ENCODE measurements at regions of chr3 and their contacts with region 1.

Region 1: DNA sequence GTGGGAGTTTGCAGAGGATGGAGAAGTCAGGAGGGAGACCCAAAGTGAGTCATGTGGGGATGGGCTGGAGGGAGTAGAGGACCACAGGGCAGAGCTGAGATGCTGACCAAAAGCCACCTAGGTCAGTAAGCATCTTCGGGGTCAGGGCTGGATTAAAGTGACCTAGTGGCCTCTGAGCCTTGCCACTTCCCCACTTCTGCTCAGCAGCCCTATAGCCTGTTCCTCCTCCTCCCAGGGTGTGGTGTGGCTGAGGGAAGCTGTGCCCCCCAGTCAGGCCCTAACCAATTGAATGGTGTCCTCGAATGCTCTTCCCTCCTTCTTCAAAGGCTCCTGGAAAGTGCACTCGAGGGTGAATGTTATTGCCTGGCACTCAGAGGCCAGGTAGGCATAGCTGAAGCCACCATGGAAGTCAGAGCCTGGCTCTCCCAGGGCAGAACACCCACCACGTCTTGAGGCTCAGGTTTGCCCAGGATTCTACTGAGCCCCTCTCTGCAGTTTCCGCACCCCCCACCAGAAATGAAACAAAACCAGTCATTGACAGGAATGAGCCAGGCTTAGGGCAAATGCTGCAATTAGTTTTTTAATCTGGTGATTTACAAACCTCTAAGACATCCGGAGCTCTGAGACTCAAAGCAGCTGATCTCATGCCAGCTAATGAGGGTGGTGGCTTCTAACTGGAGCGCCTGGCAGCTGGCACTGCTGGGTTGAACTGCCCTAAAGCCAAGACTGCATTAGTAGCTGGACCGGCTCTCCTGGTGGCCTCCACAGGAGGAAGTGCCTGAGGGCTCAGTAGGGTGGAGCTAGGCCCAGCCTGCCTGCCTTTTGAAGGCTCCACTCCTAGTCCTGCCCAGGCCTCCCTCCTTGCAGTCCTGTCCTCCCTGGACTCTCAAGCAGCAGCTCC is 26.0 kb upstream of the VIPR1 start:
- DNase-seq: no peak
- ATAC-seq: no peak
- H3K4me3 ChIP-seq: no peak overlapping the region
- H3K27ac ChIP-seq: no peak overlapping the region
- H3K4me1 ChIP-seq: no peaks in the 10 kb centered on the region
- H3K27me3 ChIP-seq: no peaks in the 10 kb centered on the region
- CTCF ChIP-seq: no peak
- EP300 ChIP-seq: no peak
- POLR2A ChIP-seq: no peak
- RAD21 ChIP-seq: no peak

Region 2: GRCh38 chr3:42228806-42229205 is 247.7 kb before region 1 on chr3:
- CTCF ChIA-PET with region 1: no interaction called
- POLR2A ChIA-PET with region 1: no interaction called
- RAD21 ChIA-PET with region 1: no interaction called
- SMC1A ChIA-PET with region 1: no interaction called
- in situ Hi-C with region 1: no loop called
- intact Hi-C with region 1: no loop called
- DNase-seq: no peak
- ATAC-seq: peak; percentile 61
- H3K4me3 ChIP-seq: no peak overlapping the region
- H3K27ac ChIP-seq: no peak overlapping the region
- H3K4me1 ChIP-seq: peaks cover 3% of the 10 kb centered on the region; the same call in 1 of the 2 replicates
- H3K27me3 ChIP-seq: no peaks in the 10 kb centered on the region
- CTCF ChIP-seq: peak; percentile 45 to 61 (median 51); a peak in 5 of 6 replicates
- EP300 ChIP-seq: no peak
- POLR2A ChIP-seq: no peak
- RAD21 ChIP-seq: peak; percentile 84

Region 3: GRCh38 chr3:42511736-42512135 is 35.3 kb after region 1 on chr3:
- CTCF ChIA-PET with region 1: no interaction called
- POLR2A ChIA-PET with region 1: no interaction called
- RAD21 ChIA-PET with region 1: no interaction called
- SMC1A ChIA-PET with region 1: no interaction called
- in situ Hi-C with region 1: no loop called
- intact Hi-C with region 1: loop called (anchors 1 kb)
- DNase-seq: no peak
- ATAC-seq: no peak
- H3K4me3 ChIP-seq: no peak overlapping the region
- H3K27ac ChIP-seq: no peak overlapping the region
- H3K4me1 ChIP-seq: no peaks in the 10 kb centered on the region
- H3K27me3 ChIP-seq: 0 out of 4 replicates have a peak, but pooled peaks cover 0 to 4% of the 10 kb centered on the region in 2 experiments
- CTCF ChIP-seq: no peak
- EP300 ChIP-seq: no peak
- POLR2A ChIP-seq: no peak
- RAD21 ChIP-seq: no peak

Region 4: DNA sequence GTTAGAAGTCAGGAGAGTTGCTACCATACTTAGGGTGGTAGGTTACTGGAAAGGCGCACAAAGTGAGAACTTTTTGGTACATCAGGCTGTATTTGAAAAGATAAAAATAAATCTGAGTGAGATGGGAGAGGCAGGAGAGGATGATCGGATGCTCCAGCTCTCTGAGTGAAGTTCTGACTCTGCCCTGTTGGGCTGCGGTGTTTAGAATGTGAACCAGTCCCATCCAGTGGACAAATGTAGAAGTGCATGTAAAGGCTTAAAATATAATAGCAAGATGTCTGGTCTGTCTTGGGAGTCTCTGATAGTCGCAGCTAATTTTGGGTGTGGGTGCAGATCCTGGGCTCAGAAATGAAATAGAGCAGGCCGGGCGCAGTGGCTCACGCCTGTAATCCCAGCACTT is 363.1 kb after region 1 on chr3:
- CTCF ChIA-PET with region 1: no interaction called
- POLR2A ChIA-PET with region 1: no interaction called
- RAD21 ChIA-PET with region 1: no interaction called
- SMC1A ChIA-PET with region 1: no interaction called
- in situ Hi-C with region 1: no loop called
- intact Hi-C with region 1: no loop called
- DNase-seq: peak; percentile 45
- ATAC-seq: peak; percentile 100
- H3K4me3 ChIP-seq: no peak overlapping the region; the same call in 1 of the 2 replicates
- H3K27ac ChIP-seq: no peak overlapping the region
- H3K4me1 ChIP-seq: no peaks in the 10 kb centered on the region
- H3K27me3 ChIP-seq: no peaks in the 10 kb centered on the region
- CTCF ChIP-seq: peak; percentile 69 to 80 (median 79)
- EP300 ChIP-seq: no peak
- POLR2A ChIP-seq: no peak
- RAD21 ChIP-seq: peak; percentile 71

Measured in GM12878 (cell line).